PC-9 (cell line): ENCODE measurements at regions of chr5 and their contacts with region 1.

Region 1: GRCh38 chr5:87267574-87268125 is at the start of gene RASA1:
- DNase-seq: peak; percentile 87 to 96
- H3K4me3 ChIP-seq: peak within 1 kb of the TSS; percentile 71
- H3K27ac ChIP-seq: peak within 1 kb of the TSS; percentile 69
- H3K4me1 ChIP-seq: peaks cover 26% of the 10 kb centered on the region; the same call in 1 of the 2 replicates
- H3K27me3 ChIP-seq: no peaks in the 10 kb centered on the region
- CTCF ChIP-seq: no peak
- total RNA-seq, gene RASA1: 55.0 and 66.6 TPM in 2 replicates

Region 2: DNA sequence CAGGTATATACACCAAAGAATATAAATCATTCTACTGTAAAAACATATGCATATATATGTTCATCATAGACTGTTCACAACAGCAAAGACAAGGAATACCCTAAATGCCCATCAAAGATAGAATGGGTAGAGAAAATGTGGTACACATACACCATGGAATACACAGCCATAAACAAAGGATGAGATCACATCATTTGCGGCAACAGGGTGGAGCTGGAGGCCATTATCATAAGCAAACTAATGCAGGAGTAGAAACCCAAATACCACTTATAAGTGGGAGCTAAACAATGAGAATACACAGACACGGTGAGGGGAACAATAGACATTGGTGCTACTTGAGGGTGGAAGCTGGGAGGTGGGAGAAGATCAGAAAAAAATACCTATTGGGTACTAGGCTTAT is 532.3 kb before region 1 on chr5:
- CTCF ChIA-PET with region 1: no interaction called
- POLR2A ChIA-PET with region 1: no interaction called
- intact Hi-C with region 1: no loop called
- DNase-seq: no peak
- H3K4me3 ChIP-seq: no peak overlapping the region
- H3K27ac ChIP-seq: no peak overlapping the region
- H3K4me1 ChIP-seq: no peaks in the 10 kb centered on the region
- H3K27me3 ChIP-seq: no peaks in the 10 kb centered on the region
- CTCF ChIP-seq: no peak

Region 3: DNA sequence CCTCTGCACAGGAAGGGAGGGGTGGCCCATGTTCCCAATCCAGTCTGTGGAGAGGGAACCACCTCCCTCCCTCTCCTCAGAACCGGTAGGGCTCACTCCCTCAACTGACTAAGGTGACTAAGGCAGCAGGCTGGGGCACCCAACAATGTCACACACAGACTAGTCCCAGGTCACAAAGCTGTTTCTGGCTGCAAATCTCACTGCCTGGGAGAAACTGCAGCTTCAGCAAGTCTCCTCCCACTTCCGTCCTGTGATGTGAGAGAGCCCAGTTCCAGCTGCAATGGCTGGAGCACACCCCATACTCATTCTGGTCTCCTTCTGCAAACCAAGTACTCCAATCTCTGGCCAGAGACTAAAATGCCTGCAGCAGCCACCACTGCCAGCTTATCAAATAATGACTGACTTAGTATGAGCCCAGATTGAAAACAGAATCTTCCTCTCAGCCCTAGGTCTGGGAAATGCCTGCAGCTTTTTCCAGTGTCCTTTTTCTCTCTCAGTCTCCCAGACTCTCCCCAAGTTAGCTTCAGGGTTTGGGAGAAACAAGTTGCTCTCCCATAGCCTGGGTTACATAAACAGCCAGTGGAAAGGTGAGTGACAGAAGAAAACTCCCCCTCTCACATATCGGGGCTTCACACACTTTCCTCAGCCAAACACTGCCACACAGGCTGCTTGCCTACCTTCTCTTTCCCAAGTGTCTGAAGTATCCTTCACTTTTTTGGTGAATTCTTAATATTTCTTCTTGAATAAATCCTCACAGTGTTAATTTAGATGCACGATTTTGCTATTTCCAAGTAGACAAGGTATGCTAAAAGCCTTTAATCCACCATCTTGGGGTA is 247.3 kb before region 1 on chr5:
- CTCF ChIA-PET with region 1: no interaction called
- POLR2A ChIA-PET with region 1: no interaction called
- intact Hi-C with region 1: loop called (anchors 1 kb)
- DNase-seq: peak; percentile 49 to 75
- H3K4me3 ChIP-seq: no peak overlapping the region
- H3K27ac ChIP-seq: no peak overlapping the region
- H3K4me1 ChIP-seq: peaks cover 23% of the 10 kb centered on the region
- H3K27me3 ChIP-seq: no peaks in the 10 kb centered on the region
- CTCF ChIP-seq: no peak

Region 4: GRCh38 chr5:87099246-87099925 is 168.3 kb before region 1 on chr5:
- CTCF ChIA-PET with region 1: no interaction called
- POLR2A ChIA-PET with region 1: interaction called, 33 read pairs
- intact Hi-C with region 1: no loop called
- DNase-seq: peak; percentile 23 to 75
- H3K4me3 ChIP-seq: no peak overlapping the region
- H3K27ac ChIP-seq: peak overlapping the region; percentile 53
- H3K4me1 ChIP-seq: peaks cover 19% of the 10 kb centered on the region
- H3K27me3 ChIP-seq: no peaks in the 10 kb centered on the region
- CTCF ChIP-seq: no peak

Region 5: GRCh38 chr5:87151547-87151946 is 116.1 kb before region 1 on chr5:
- CTCF ChIA-PET with region 1: no interaction called
- POLR2A ChIA-PET with region 1: interaction called, 31 read pairs
- intact Hi-C with region 1: loop called (anchors 10 kb)
- DNase-seq: peak; percentile 6 to 71
- H3K4me3 ChIP-seq: no peak overlapping the region
- H3K27ac ChIP-seq: peak overlapping the region; percentile 38
- H3K4me1 ChIP-seq: peaks cover 23% of the 10 kb centered on the region
- H3K27me3 ChIP-seq: no peaks in the 10 kb centered on the region
- CTCF ChIP-seq: no peak

Region 6: DNA sequence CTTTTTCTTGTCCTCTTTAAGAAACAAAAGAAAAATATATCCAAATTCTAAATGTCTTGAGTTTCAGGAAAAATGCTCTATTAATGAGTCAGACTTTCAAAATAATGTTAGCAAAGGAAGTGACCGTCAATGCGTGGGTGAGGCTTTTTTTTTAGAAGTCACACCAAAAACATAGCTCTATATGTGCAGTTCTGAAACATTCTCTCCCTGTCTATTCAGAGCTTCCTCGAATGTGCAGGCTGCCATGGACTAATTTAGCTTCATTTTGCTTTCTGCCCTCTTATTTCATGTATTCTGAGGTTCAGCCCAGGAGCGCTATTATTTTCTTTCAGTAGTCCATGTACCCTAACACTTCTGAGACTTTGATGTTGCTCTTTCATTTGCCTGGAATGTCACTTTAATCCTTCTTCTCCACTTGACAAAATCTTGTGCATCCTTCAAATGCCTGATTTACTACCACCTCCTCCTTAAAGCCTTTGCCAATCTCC is 72.5 kb before region 1 on chr5:
- CTCF ChIA-PET with region 1: no interaction called
- POLR2A ChIA-PET with region 1: interaction called, 5 read pairs
- intact Hi-C with region 1: loop called (anchors 10 kb)
- DNase-seq: peak in 1 of 2 experiments; percentile 40
- H3K4me3 ChIP-seq: no peak overlapping the region
- H3K27ac ChIP-seq: peak overlapping the region; percentile 29; the same call in 1 of the 2 replicates
- H3K4me1 ChIP-seq: peaks cover 18% of the 10 kb centered on the region
- H3K27me3 ChIP-seq: no peaks in the 10 kb centered on the region
- CTCF ChIP-seq: no peak

Region 7: DNA sequence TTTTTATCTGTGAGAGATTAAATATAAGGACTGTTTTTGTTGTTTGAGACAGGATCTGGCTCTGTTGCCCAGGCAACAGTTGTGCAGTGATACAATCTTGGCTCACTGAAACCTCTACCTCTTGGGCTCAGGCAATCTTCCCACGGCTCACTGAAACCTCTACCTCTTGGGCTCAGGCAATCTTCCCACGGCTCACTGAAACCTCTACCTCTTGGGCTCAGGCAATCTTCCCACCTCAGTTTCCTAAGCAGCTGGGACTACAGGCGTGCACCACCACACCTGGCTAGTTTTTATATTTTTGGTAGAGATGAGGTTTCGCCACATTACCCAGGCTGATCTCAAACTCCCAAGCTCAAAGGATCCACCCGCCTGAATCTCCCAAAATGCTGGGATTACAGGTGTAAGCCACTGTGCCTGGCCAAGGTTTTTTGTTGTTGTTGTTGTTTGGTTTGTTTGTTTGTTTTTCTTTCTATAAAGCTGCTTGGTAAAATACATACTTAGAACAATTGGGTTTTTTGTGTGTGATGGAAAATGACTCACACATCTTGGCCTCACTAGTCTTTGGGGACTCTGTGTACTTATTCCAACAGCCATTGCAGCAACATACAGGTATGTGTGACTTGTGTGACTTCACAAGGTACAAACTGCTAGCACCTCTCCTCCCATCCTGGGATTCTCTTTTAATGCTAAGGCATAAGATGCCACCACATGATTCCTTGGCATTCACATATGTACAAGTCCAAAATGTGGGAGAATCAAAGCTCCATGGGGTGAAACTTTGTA is 36.4 kb before region 1 on chr5:
- CTCF ChIA-PET with region 1: interaction called, 3 read pairs
- POLR2A ChIA-PET with region 1: interaction called, 10 read pairs
- intact Hi-C with region 1: loop called (anchors 1 kb)
- DNase-seq: peak in 1 of 2 experiments; percentile 27
- H3K4me3 ChIP-seq: no peak overlapping the region
- H3K27ac ChIP-seq: no peak overlapping the region
- H3K4me1 ChIP-seq: no peaks in the 10 kb centered on the region
- H3K27me3 ChIP-seq: no peaks in the 10 kb centered on the region
- CTCF ChIP-seq: no peak